Posterior cingulate gyrus (tissue), 11 donors: ENCODE measurements at regions of chr1 and their contacts with region 1.

Region 1: GRCh38 chr1:109426278-109427170 is at the start of gene PSMA5:
- DNase-seq: peak; percentile 94 to 100 (median 96)

Region 2: DNA sequence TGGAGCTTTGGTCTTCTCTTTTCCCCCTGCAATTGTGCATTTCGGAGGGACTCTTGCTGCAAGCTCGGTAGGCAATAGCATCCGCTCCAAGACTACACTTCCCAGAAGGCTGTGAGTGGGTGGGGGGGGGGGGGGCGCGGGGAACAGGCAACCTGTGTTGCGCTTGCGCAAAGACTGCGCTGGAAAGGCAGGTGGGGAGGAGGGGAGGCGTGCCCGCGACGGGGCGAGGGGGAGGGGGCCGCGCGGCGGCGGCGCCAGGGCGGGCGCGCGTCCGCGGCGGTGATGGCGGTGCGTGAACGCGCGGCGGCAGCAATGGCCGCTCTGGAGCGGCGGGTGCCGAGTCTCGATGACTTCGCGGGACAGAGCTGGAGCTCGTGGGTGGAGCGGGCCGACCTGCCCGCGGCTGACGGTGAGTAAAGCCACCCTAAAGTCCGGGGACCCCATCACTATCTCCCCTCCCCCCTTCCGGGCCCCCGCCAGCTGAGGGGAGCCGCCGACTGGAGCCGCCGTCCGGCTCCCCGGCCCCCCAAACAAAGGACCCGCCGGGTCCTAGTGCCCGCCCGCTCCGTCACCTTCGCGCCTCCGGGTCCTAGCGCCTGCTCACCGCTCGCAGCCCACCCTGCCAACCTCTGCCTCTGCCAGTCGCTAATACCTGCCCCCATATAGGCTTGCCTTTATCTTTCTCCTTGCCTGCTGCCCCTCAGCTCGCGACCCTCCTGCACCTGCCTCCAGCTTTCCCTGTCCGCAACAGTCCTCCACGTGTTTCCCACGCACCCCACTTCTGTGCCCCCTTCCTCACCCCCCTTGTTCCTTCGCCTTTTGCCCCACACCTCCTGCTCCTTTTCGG is 57.4 kb after region 1 on chr1 and contains the start of gene ATXN7L2:
- intact Hi-C with region 1: loop called (anchors 2 kb)
- DNase-seq: peak; percentile 85 to 98 (median 90)